ENCODE measurements at regions of chr3 and their contacts with region 1.

Region 1: GRCh38 chr3:184417619-184418327 is 37.9 kb downstream of the CHRD start:
- DNase-seq: peak; percentile 85 to 90 (median 88)
- H3K4me3 ChIP-seq: no peak overlapping the region
- H3K27ac ChIP-seq: no peak overlapping the region
- H3K4me1 ChIP-seq: no peaks in the 10 kb centered on the region
- H3K27me3 ChIP-seq: no peaks in the 10 kb centered on the region

Region 2: GRCh38 chr3:184218814-184219213 is 199.0 kb before region 1 on chr3:
- CTCF ChIA-PET with region 1: no interaction called
- POLR2A ChIA-PET with region 1: no interaction called
- DNase-seq: peak in 1 of 3 donors; percentile 28
- H3K4me3 ChIP-seq: no peak overlapping the region
- H3K27ac ChIP-seq: no peak overlapping the region
- H3K4me1 ChIP-seq: no peaks in the 10 kb centered on the region
- H3K27me3 ChIP-seq: peaks cover 0 to 4% (median 2%) of the 10 kb centered on the region in 5 experiments

Region 3: GRCh38 chr3:184469423-184469822 is 51.6 kb after region 1 on chr3:
- CTCF ChIA-PET with region 1: interaction called, 43 read pairs
- POLR2A ChIA-PET with region 1: interaction called, 3 read pairs
- DNase-seq: no peak
- H3K4me3 ChIP-seq: no peak overlapping the region
- H3K27ac ChIP-seq: no peak overlapping the region
- H3K4me1 ChIP-seq: peaks cover 6 to 67% (median 50%) of the 10 kb centered on the region in 4 experiments
- H3K27me3 ChIP-seq: no peaks in the 10 kb centered on the region

Region 4: DNA sequence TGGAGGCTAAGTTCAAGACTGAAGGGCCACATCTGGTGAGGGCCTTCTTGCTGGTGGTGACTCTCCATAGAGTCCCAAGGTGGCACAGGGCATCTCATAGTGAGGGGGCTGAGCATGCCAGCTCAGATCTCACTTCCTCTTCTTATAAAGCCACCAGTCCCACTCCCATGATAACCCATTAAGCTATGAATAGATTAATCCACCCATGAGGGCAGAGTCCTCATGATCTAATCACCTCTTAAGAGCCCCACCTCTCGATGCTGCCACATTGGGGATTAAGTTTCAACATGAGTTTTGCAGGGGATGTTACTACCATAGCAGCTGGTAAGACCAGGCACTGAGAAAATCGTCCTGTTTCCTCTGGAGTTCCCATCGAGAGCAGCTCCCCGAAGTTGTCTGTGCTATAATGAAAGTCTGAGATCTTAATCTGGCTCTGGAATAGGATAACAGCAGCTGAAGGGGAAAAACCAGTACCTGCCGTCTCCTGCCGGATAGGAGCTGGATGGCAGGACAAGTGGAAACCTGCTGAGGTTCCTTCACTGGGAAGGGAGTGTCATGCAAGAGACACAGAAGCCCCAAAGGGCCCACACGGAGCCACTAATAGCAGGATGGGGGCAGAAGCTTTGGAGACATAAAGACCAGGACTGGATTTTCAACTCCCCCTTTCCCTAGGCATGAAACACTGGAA is 64.4 kb after region 1 on chr3:
- CTCF ChIA-PET with region 1: interaction called, 10 read pairs
- POLR2A ChIA-PET with region 1: no interaction called
- DNase-seq: peak in 1 of 3 donors; percentile 62
- H3K4me3 ChIP-seq: no peak overlapping the region
- H3K27ac ChIP-seq: no peak overlapping the region
- H3K4me1 ChIP-seq: peaks cover 0 to 15% (median 6%) of the 10 kb centered on the region in 4 experiments
- H3K27me3 ChIP-seq: no peaks in the 10 kb centered on the region

Region 5: GRCh38 chr3:184543843-184544512 is 126.2 kb after region 1 on chr3:
- CTCF ChIA-PET with region 1: interaction called, 173 read pairs
- POLR2A ChIA-PET with region 1: no interaction called
- DNase-seq: peak; percentile 85 to 93 (median 89)
- H3K4me3 ChIP-seq: peak overlapping the region in 1 of 7 experiments; percentile 45
- H3K27ac ChIP-seq: no peak overlapping the region
- H3K4me1 ChIP-seq: peaks cover 0 to 12% (median 3%) of the 10 kb centered on the region in 4 experiments
- H3K27me3 ChIP-seq: peaks cover 0 to 8% (median 3%) of the 10 kb centered on the region in 5 experiments

Region 6: DNA sequence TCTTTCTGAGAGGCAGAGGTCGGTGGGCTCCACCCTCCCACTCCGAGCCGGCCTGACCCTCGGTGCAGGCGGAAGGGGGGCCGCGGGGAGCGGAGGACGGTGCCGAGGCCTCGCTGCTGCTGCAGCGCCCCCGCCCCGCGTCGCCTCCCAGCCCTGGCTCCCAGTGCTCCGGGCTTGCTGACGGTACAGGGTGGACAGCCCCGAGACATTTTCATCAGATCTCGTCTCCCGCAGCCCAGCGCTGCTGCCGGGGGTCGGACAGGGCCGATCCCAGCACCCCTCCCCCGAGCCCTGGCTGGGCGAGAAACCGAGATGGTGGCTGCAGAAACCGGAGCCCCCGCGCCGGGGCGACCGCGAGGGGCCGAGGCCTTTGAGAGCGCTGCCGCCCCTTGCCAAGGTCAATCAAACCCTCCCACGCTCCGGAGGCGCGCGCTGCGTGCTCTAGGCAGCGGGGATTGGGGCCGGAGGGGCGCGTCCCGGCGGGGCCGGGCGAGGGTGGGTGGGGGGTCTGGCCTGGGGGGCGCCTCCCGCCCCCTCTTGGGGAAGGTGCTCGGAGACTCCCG is 186.3 kb after region 1 on chr3:
- CTCF ChIA-PET with region 1: no interaction called
- POLR2A ChIA-PET with region 1: no interaction called
- DNase-seq: no peak
- H3K4me3 ChIP-seq: peak overlapping the region; percentile 8 to 66 (median 53)
- H3K27ac ChIP-seq: no peak overlapping the region
- H3K4me1 ChIP-seq: peaks cover 0 to 43% (median 38%) of the 10 kb centered on the region in 4 experiments
- H3K27me3 ChIP-seq: peaks cover 6 to 56% (median 23%) of the 10 kb centered on the region in 5 experiments